Activated naive CD4-positive, alpha-beta T cell treated with anti-CD3 and anti-CD28 coated beads, Interleukin-2, amount 10 ng/mL, durations not matched to agents 7 days and 5 days (primary cell): ENCODE measurements at regions of chr1 and their contacts with region 1.

Region 1: DNA sequence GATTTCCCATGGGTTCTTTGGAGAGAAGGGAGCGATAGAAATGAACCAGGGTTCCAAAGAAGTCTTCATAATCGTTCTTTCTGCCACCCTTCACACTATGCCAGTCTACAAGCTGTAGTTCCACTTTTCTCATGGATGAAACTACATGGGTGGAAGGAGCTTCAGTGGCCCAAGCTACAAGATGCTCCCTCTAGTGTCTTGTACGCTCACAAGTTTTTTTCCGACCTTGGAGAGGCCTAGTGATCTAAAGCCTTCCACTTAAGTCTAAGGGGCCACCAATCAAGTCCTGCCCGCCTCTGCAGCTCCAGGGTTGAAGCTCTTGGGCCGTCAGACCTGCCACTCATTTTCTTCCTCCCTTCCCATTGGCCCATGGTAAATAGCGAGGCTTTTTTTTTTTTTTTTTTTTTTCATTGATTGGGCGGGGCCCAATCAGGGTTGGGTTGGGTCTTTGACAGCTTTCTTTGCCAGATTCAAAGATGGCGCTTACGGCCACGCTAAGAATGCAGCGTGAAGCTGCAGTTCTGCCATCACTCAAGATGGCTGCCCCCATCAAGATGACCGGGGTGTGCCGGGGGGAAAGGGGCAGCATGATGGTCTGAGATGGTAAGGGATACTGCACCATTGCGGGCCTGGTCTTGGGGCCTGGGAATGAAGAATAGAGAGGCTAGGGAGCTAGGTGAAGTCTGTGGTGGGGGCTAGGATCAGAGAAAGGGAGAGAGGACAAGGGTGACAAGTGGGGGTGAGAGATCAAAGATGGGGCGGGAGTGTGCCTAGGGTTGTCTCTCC is at the start of gene TOMM40L:
- DNase-seq: peak; percentile 94
- H3K4me3 Mint-ChIP-seq: peak within 1 kb of the TSS; percentile 89
- H3K27ac Mint-ChIP-seq: peak within 1 kb of the TSS; percentile 89
- H3K4me1 Mint-ChIP-seq: peaks cover 45% of the 10 kb centered on the region
- H3K27me3 Mint-ChIP-seq: no peaks in the 10 kb centered on the region

Region 2: GRCh38 chr1:160925652-160926241 is 300.0 kb before region 1 on chr1:
- CTCF ChIA-PET with region 1: no interaction called
- DNase-seq: no peak
- H3K4me3 Mint-ChIP-seq: no peak overlapping the region
- H3K27ac Mint-ChIP-seq: no peak overlapping the region
- H3K4me1 Mint-ChIP-seq: no peaks in the 10 kb centered on the region
- H3K27me3 Mint-ChIP-seq: peaks cover 26% of the 10 kb centered on the region

Region 3: DNA sequence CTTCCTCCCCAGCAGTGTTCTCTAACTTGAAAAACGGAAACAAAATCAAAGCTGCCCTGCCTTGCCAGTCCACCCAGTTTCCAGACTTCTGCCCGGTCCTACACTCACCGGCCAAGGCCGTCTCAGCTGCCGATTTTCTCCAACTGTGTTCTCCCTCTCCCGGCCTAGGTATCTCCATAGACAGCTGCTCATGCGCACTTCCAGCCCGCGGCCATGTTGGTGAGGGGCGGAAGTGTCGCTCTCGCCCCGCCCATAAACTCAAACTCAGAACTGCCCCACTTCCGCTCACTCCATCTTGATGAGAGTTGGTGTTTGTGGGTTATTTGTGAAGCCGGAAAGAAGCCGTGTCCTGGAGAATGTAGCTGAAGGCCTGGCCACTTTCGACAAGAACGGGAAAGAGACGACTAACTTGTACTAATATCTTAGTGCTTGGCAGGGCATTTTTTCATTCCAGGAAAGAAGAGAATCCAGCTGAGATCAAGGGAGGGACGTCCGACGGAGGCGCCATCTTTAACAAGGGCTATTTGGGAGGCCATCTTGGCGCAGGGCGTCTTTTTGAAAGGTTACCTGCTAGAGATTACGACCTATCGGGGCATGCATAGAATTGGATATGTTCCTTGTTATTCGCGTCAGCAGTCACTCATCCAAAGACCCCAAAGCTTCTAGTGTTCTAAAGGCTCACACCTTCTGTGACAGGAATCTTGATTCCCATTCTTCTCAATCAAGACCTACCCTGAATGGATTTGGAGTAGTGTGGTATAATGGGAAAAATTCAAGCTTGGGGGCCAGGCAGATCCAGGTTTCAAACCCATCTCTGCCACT is 179.8 kb before region 1 on chr1 and contains the start of gene USF1:
- CTCF ChIA-PET with region 1: no interaction called
- DNase-seq: peak; percentile 94
- H3K4me3 Mint-ChIP-seq: peak within 1 kb of the TSS; percentile 86
- H3K27ac Mint-ChIP-seq: peak within 1 kb of the TSS; percentile 97
- H3K4me1 Mint-ChIP-seq: peaks cover 57% of the 10 kb centered on the region
- H3K27me3 Mint-ChIP-seq: no peaks in the 10 kb centered on the region

Region 4: DNA sequence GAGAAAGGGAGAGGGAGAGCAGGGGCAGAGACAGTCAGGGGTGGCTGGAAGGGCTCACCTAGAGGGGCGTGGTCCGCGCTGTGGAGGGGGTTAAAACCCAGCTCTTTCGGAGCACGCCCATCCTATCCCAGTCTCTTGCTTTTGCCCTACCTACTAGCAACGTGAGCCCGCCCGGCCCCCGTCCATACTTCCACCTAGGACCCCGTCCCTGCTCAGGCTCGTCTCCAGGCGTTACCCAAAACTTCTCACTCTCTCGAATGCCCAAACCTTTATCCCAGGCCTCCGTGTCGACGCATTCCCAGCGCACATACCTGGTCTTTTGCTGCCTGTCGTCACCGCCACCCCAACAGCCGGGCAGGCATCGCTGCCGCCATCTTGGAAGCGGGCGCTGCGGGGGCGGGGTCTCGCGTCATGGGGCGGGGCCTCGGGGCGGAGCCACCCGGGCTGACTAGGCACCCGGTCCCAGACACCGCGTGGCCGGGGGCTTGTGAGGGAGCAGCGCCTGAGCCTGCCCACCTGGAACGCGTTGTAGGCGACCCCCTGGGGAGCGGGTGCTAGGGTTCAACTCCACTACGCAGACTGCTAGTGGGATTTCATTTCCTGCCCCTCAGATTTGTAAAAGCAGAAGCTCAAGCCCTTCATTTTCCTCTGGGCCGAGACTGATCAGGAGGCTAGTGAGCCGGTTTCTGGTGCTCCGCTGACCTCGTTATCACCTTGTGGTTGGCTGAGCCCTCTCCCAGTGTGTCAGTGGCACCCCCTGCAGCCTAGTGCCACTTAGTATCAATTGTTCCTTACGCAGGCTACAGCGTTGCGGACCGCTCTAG is 48.4 kb before region 1 on chr1 and contains the start of gene B4GALT3:
- CTCF ChIA-PET with region 1: interaction called, 48 read pairs
- DNase-seq: peak; percentile 96
- H3K4me3 Mint-ChIP-seq: peak within 1 kb of the TSS; percentile 94
- H3K27ac Mint-ChIP-seq: peak within 1 kb of the TSS; percentile 95
- H3K4me1 Mint-ChIP-seq: peaks cover 72% of the 10 kb centered on the region
- H3K27me3 Mint-ChIP-seq: no peaks in the 10 kb centered on the region

Region 5: GRCh38 chr1:161192476-161193465 is 33.0 kb before region 1 on chr1:
- CTCF ChIA-PET with region 1: interaction called, 32 read pairs
- DNase-seq: peak; percentile 78
- H3K4me3 Mint-ChIP-seq: no peak overlapping the region
- H3K27ac Mint-ChIP-seq: peak overlapping the region; percentile 86
- H3K4me1 Mint-ChIP-seq: peaks cover 62% of the 10 kb centered on the region
- H3K27me3 Mint-ChIP-seq: no peaks in the 10 kb centered on the region

Region 6: DNA sequence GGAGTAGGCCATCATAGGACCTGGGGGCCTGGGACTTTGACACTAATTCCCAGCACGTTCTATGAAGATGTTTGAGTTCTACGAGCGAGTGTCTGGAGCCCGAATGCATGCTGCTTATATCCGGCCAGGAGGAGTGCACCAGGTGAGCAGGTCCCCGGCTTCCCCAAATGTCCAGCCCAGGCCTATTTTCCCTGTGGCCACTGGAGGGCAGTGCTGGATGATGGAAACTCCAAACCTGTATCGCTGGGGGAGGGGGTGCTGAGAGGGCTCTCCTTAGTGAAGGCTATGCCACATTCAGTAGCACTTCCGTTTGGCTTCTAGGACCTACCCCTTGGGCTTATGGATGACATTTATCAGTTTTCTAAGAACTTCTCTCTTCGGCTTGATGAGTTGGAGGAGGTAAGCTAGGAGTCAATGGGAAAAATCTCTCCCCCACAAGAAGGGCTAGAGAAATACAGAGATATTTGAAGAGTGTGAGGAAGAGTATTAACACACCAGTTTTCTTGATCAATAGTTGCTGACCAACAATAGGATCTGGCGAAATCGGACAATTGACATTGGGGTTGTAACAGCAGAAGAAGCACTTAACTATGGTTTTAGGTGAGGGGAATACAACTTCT is 15.8 kb before region 1 on chr1:
- CTCF ChIA-PET with region 1: interaction called, 94 read pairs
- DNase-seq: peak; percentile 83
- H3K4me3 Mint-ChIP-seq: no peak overlapping the region
- H3K27ac Mint-ChIP-seq: peak overlapping the region; percentile 82
- H3K4me1 Mint-ChIP-seq: peaks cover 47% of the 10 kb centered on the region
- H3K27me3 Mint-ChIP-seq: no peaks in the 10 kb centered on the region

Region 7: DNA sequence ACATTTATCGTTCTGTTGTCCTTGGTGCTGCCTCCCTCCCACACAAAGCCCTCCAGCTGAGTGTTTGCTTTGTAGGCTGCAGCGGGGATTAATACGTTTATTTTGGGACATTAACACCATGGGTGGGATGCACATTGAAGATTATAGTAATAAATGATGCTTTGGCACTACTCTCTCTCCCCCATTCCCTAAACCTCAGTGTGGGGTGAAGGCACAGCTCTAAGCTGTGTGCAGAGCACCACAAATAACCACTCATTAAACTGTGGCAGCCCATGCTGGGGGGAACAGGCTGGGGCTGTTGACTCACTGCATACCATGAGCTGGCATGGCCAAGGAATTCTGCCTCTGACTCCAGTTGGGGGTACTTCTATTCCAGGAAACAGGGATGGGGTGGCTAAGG is 40.5 kb after region 1 on chr1:
- CTCF ChIA-PET with region 1: no interaction called
- DNase-seq: no peak
- H3K4me3 Mint-ChIP-seq: no peak overlapping the region
- H3K27ac Mint-ChIP-seq: no peak overlapping the region
- H3K4me1 Mint-ChIP-seq: peaks cover 7% of the 10 kb centered on the region
- H3K27me3 Mint-ChIP-seq: peaks cover 39% of the 10 kb centered on the region

Region 8: GRCh38 chr1:161374373-161374772 is 148.6 kb after region 1 on chr1:
- CTCF ChIA-PET with region 1: interaction called, 157 read pairs
- DNase-seq: no peak
- H3K4me3 Mint-ChIP-seq: no peak overlapping the region
- H3K27ac Mint-ChIP-seq: no peak overlapping the region
- H3K4me1 Mint-ChIP-seq: no peaks in the 10 kb centered on the region
- H3K27me3 Mint-ChIP-seq: no peaks in the 10 kb centered on the region

Region 9: GRCh38 chr1:161389691-161390558 is 164.2 kb after region 1 on chr1:
- CTCF ChIA-PET with region 1: interaction called, 157 read pairs
- DNase-seq: peak; percentile 98
- H3K4me3 Mint-ChIP-seq: peak overlapping the region; percentile 89
- H3K27ac Mint-ChIP-seq: peak overlapping the region; percentile 95
- H3K4me1 Mint-ChIP-seq: peaks cover 50% of the 10 kb centered on the region
- H3K27me3 Mint-ChIP-seq: peaks cover 4% of the 10 kb centered on the region